CD4-positive, alpha-beta T cell (primary cell): ENCODE measurements at regions of chr1 and their contacts with region 1.

Region 1: DNA sequence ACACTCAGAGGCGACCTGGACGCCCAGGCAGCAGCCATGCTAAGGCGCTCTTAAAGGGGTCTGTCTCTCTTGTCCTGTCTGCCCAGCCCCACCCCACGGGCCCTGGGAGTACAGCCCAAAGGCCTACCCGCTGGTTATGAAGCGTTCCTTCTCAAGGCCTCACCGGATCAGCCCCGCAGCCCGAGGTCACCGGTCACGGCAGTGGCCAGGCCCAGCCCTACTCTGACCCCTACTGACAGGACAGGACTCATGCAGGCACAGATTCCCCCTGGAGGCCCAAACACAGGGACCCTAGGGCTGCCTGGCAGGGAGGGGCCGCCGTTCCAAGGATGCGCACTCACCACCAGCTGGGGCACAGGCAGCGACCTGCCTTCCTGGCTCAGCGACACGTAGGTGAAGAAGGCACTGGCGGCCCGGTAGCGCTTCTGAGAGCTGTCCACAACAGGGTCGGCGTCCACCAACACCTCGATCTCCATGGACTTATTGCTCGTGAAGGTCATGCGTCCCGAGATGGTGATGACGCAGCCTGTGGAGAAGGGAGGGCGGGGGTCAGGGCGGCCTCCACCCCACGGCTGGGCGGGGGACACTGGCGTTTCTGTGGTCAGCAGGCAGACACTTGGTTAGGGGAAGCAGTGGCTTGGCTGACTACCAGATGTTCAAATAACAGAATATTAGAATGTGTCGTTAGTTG is 20.0 kb upstream of the GPR153 start:
- DNase-seq: no peak
- ATAC-seq: no peak
- H3K4me3 ChIP-seq: no peak overlapping the region
- H3K4me3 Mint-ChIP-seq: no peak overlapping the region
- H3K27ac ChIP-seq: no peak overlapping the region
- H3K27ac Mint-ChIP-seq: no peak overlapping the region
- H3K4me1 ChIP-seq: no peaks in the 10 kb centered on the region
- H3K4me1 Mint-ChIP-seq: no peaks in the 10 kb centered on the region
- H3K27me3 ChIP-seq: no peaks in the 10 kb centered on the region
- H3K27me3 Mint-ChIP-seq: no peaks in the 10 kb centered on the region
- CTCF ChIP-seq: no peak

Region 2: DNA sequence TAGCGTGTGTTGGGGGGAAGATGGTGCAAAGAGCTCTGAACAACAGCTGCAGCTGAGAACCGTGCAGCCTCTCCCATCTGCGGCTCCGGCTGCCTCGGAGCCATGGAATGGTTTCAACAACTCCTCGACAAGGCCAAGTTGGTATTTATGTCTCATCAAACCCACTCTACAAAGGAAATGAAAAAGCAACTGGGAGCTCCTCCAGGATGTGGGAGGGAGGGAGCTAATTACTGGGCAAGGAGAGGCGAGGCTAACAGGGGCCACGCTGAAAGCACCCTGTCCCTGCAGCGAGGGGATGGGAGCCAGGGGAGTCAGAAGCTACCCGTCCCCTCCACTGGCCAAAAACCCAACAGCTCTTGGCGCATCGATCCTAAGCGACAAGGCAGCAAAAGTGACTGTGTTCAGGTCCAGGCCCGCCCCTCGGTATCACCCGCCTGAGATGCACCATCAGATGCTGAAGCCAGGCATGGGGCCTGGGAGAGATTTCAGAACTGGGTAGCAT is 49.6 kb after region 1 on chr1:
- CTCF ChIA-PET with region 1: no interaction called
- POLR2A ChIA-PET with region 1: no interaction called
- intact Hi-C with region 1: loop called in 1 of 2 experiments (anchors 2 kb)
- DNase-seq: no peak
- ATAC-seq: no peak
- H3K4me3 ChIP-seq: no peak overlapping the region
- H3K4me3 Mint-ChIP-seq: no peak overlapping the region
- H3K27ac ChIP-seq: no peak overlapping the region
- H3K27ac Mint-ChIP-seq: no peak overlapping the region
- H3K4me1 ChIP-seq: no peaks in the 10 kb centered on the region
- H3K4me1 Mint-ChIP-seq: no peaks in the 10 kb centered on the region
- H3K27me3 ChIP-seq: no peaks in the 10 kb centered on the region
- H3K27me3 Mint-ChIP-seq: no peaks in the 10 kb centered on the region
- CTCF ChIP-seq: no peak